ENCODE measurements at regions of chr14 and their contacts with region 1.

Region 1: DNA sequence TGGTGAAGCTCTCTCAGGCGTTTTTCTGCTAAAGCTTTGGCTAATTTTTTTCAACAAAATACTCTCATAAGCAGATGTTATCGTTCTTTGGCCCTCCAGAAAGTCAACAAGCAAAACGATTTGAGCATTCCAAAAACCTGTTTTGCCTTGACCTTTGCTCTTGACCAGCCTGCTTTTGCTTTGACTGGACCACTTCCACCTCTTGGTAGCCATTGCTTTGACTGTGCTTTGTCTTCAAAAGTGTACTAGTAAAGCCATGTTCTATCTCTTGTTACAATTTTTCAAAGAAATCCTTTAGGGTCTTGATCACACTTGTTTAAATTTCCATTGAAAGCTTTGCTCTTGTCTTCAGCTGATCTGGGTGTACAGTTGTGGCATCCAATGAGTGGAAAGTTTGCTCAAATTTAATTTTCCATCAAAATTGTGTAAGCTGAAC is 10.7 kb upstream of the ARID4A start:
- DNase-seq: peak; percentile 75 to 81
- H3K4me3 ChIP-seq: no peak overlapping the region
- H3K4me3 Mint-ChIP-seq: peak overlapping the region; percentile 67
- H3K27ac Mint-ChIP-seq: peak overlapping the region; percentile 21
- H3K4me1 ChIP-seq: peaks cover 36% of the 10 kb centered on the region
- H3K4me1 Mint-ChIP-seq: peaks cover 48% of the 10 kb centered on the region
- H3K27me3 ChIP-seq: no peaks in the 10 kb centered on the region
- H3K27me3 Mint-ChIP-seq: no peaks in the 10 kb centered on the region
- CTCF ChIP-seq: no peak

Region 2: GRCh38 chr14:58244556-58245387 is 42.9 kb before region 1 on chr14 and contains the start of gene PSMA3:
- CTCF ChIA-PET with region 1: interaction called, 3 read pairs
- POLR2A ChIA-PET with region 1: interaction called, 7 read pairs
- intact Hi-C with region 1: loop called (anchors 1 kb)
- DNase-seq: peak; percentile 97 to 98
- H3K4me3 ChIP-seq: peak within 1 kb of the TSS; percentile 96
- H3K4me3 Mint-ChIP-seq: peak within 1 kb of the TSS; percentile 96
- H3K27ac Mint-ChIP-seq: peak within 1 kb of the TSS; percentile 99
- H3K4me1 ChIP-seq: peaks cover 21% of the 10 kb centered on the region; the same call in 1 of the 2 replicates
- H3K4me1 Mint-ChIP-seq: peaks cover 9% of the 10 kb centered on the region
- H3K27me3 ChIP-seq: no peaks in the 10 kb centered on the region
- H3K27me3 Mint-ChIP-seq: no peaks in the 10 kb centered on the region
- CTCF ChIP-seq: no peak
- total RNA-seq, gene PSMA3: 334 and 352 TPM in 2 replicates

Region 3: DNA sequence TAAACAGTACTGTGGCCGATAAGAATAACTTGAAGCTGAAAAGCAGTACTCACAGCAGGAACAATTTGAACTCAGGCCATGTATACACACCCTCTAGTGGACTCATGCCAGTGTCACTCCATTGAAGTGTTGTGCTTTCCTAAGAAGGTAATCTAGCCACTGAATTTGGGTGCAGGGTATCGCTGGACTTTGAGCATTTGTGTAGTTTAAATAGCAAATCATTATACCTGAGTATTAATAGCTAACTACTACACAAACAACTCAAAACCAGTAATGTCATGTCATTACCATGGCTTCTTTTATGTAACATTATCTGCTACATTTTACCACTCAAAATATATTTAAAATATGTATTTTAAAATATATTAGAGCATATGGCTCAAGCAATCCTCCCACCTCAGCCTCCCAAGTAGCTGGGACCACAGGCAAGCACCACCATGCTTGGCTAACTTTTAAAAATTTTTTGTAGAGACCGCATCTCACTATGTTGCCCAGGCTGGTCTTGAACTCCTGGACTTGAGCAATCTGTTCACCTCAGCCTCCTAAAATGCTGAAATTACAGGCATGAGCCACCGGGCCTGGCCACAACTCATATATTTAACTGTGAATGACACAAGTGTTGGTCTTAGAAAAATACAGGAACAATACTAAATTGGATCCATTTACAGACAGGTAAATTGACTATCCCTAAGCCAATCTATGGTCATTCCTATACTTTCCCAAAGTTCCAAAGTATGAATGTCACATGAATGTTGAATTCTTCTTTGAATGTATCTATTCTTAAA is 14.8 kb before region 1 on chr14:
- CTCF ChIA-PET with region 1: no interaction called
- POLR2A ChIA-PET with region 1: no interaction called
- intact Hi-C with region 1: loop called (anchors 1 kb)
- DNase-seq: peak; percentile 45 to 66
- H3K4me3 ChIP-seq: no peak overlapping the region
- H3K4me3 Mint-ChIP-seq: no peak overlapping the region
- H3K27ac Mint-ChIP-seq: no peak overlapping the region
- H3K4me1 ChIP-seq: peaks cover 24% of the 10 kb centered on the region
- H3K4me1 Mint-ChIP-seq: peaks cover 9% of the 10 kb centered on the region
- H3K27me3 ChIP-seq: no peaks in the 10 kb centered on the region
- H3K27me3 Mint-ChIP-seq: no peaks in the 10 kb centered on the region
- CTCF ChIP-seq: peak; percentile 32 to 42

Measured in Caco-2 (cell line).